Common myeloid progenitor, CD34-positive (primary cell): ENCODE measurements at regions of chr9 and their contacts with region 1.

Region 1: GRCh38 chr9:99211741-99212140 is 10.0 kb downstream of the ALG2 start:
- DNase-seq: no peak
- H3K4me3 ChIP-seq: no peak overlapping the region
- H3K27ac ChIP-seq: no peak overlapping the region
- H3K4me1 ChIP-seq: peaks cover 2 to 18% (median 8%) of the 10 kb centered on the region in 4 experiments
- H3K27me3 ChIP-seq: no peaks in the 10 kb centered on the region

Region 2: DNA sequence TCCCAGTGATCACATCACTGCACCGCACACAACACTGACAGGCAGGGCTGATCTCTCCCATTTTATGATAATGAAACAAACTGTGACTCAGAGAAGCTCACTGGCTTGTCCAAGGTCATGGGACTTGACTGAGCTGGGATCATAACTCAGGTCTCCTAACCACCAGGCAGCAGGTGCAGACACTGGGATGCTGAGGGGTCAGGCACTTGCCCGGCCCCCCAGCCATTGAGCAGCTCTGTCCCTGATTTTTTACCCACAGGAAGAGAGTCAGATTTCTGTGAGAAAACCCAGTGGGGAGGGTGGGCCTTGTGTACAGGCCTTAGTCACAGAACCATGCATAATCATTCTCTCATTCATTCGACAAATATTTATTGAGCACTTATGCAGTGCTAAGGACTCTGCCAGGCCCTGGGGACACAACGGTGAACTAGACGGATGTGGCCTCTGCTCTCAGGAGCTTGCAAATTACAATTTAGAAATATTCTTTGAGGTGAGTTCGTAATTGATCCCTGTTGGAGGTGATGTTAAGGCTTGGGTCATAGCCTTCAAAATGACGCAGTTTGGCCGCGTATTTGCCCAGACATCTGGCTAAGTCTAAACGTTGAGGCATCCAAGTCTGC is 161.3 kb before region 1 on chr9:
- CTCF ChIA-PET with region 1: no interaction called
- POLR2A ChIA-PET with region 1: no interaction called
- DNase-seq: no peak
- H3K4me3 ChIP-seq: no peak overlapping the region
- H3K27ac ChIP-seq: no peak overlapping the region
- H3K4me1 ChIP-seq: peaks cover 5 to 45% (median 14%) of the 10 kb centered on the region in 4 experiments
- H3K27me3 ChIP-seq: no peaks in the 10 kb centered on the region

Region 3: GRCh38 chr9:99221621-99222415 is 10.1 kb after region 1 on chr9 and contains the starts of genes ALG2 and SEC61B:
- CTCF ChIA-PET with region 1: interaction called, 10 read pairs
- POLR2A ChIA-PET with region 1: no interaction called
- DNase-seq: peak; percentile 96 to 97 (median 97)
- H3K4me3 ChIP-seq: peak within 1 kb of the TSS; percentile 86 to 99 (median 93)
- H3K27ac ChIP-seq: peak within 1 kb of the TSS; percentile 99 to 100
- H3K4me1 ChIP-seq: peaks cover 16 to 37% (median 24%) of the 10 kb centered on the region in 4 experiments
- H3K27me3 ChIP-seq: no peaks in the 10 kb centered on the region